GM10248 (cell line): ENCODE measurements at regions of chr17 and their contacts with region 1.

Region 1: DNA sequence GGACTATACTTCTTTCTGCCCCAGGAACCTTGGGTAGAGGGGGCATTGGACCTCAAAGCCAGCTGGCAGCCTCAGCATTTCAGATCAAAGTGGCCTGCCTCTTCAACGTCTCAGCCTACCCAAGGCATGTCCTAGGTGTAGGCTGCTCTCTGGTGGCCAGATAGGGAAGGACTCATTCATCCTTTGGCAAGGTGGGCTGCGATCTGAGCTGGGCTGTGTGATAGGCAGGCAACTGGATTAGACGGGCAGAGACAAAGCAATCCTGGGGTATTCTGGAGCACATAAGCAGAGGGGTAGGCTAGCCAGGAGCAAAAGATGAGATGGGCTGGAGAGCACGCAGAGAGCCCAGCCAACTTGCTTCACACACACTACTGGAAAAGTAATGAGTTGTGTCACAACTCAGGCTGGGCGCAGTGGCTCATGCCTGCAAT is 8.8 kb upstream of the NAGLU start:
- DNase-seq: peak; percentile 76
- CTCF ChIP-seq: peak; percentile 93

Region 2: GRCh38 chr17:42221937-42222745 is 305.1 kb before region 1 on chr17:
- CTCF ChIA-PET with region 1: no interaction called
- POLR2A ChIA-PET with region 1: no interaction called
- DNase-seq: peak; percentile 72
- CTCF ChIP-seq: peak; percentile 73

Region 3: GRCh38 chr17:42431758-42432211 is 95.5 kb before region 1 on chr17:
- CTCF ChIA-PET with region 1: interaction called, 12 read pairs
- POLR2A ChIA-PET with region 1: no interaction called
- DNase-seq: no peak
- CTCF ChIP-seq: no peak

Region 4: DNA sequence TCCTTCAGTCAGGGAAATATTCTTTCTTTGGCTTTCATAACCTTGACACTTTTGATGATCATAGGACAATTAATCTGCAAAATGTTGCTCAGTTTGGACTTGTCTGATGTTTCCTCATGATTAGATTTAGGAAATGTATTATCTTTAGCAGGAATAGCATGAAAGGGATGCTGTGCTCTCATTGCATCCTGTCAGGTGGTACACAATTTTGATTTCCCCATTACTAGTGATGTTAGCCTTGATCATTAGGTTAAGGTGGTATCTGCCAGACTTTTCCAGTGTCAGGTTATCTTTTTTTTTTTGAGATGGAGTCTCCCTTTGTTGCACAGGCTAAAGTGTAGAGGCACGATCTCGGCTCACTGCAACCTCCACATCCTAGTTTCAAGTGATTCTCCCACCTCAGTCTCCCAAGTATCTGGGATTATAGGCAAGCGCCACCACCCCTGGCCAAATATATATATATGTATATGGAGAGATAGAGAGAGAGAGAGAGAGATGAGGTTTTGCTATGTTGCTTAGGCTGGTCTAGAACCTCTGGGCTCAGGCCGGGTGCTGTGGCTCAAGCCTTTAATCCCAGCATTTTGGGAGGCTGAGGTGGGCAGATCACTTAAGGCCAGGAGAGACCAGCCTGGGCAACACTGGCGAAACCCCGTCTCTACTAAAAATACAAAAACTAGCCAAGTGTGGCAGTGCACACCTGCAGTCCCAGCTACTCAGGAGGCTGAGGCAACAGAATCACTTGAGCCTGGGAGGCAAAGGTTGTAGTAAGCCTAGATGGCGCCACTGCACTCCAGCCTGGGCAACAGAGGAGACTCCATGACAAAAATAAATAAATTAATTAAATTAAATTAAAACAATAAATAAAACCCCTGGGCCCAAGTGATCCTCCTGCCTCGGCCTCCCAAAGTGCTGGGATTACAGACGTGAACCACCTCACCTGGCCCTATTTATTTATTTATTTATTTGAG is 88.4 kb before region 1 on chr17:
- CTCF ChIA-PET with region 1: interaction called, 14 read pairs
- POLR2A ChIA-PET with region 1: no interaction called
- DNase-seq: no peak
- CTCF ChIP-seq: peak; percentile 50

Region 5: GRCh38 chr17:42819944-42820535 is 292.8 kb after region 1 on chr17:
- CTCF ChIA-PET with region 1: no interaction called
- POLR2A ChIA-PET with region 1: no interaction called
- DNase-seq: peak; percentile 62
- CTCF ChIP-seq: peak; percentile 72